A549 (cell line): ENCODE measurements at regions of chr17 and their contacts with region 1.

Region 1: GRCh38 chr17:35242805-35243560 is at the start of gene SLFN5:
- DNase-seq: peak; percentile 91 to 98
- ATAC-seq: peak; percentile 83 to 96
- H3K4me3 ChIP-seq: peak within 1 kb of the TSS; percentile 82
- H3K27ac ChIP-seq: peak within 1 kb of the TSS; percentile 88
- H3K4me1 ChIP-seq: peaks cover 40% of the 10 kb centered on the region
- CTCF ChIP-seq: no peak
- EP300 ChIP-seq: no peak
- POLR2A ChIP-seq: peak; percentile 91
- RAD21 ChIP-seq: no peak; a peak in 2 of 5 replicates
- polyA plus RNA-seq, gene SLFN5: 30.3 and 33.1 TPM in 2 replicates

Region 2: DNA sequence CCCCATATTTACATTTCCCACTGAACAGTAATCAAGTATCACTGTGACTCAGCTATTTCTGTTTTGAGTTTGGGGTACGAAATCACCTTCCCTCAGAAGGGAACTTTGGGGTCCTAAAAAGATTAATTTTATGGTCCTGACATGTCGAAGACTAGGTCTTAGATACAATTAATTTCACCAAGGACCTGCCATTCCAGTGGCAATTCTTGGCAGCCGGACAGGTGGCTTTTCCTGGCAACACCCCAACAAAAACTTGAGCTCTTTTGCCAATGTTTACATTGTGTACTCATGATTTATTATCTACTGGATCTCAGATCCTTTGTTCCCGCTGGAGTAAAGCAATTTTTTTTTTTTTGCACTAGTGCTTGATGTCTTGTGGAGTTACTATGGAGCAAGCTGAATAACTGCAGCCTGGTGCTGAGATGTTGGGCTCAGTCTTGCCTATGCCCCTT is 14.3 kb after region 1 on chr17:
- CTCF ChIA-PET with region 1: interaction called, 3 read pairs
- POLR2A ChIA-PET with region 1: interaction called, 65 read pairs
- DNase-seq: peak; percentile 51 to 89
- ATAC-seq: peak; percentile 51 to 70
- H3K4me3 ChIP-seq: no peak overlapping the region
- H3K27ac ChIP-seq: peak overlapping the region; percentile 66 to 76
- H3K4me1 ChIP-seq: peaks cover 45% of the 10 kb centered on the region
- CTCF ChIP-seq: no peak
- EP300 ChIP-seq: peak; percentile 45 to 59; a peak in 1 of 5 replicates
- POLR2A ChIP-seq: no peak
- RAD21 ChIP-seq: peak; percentile 12 to 23; a peak in 1 of 5 replicates

Region 3: DNA sequence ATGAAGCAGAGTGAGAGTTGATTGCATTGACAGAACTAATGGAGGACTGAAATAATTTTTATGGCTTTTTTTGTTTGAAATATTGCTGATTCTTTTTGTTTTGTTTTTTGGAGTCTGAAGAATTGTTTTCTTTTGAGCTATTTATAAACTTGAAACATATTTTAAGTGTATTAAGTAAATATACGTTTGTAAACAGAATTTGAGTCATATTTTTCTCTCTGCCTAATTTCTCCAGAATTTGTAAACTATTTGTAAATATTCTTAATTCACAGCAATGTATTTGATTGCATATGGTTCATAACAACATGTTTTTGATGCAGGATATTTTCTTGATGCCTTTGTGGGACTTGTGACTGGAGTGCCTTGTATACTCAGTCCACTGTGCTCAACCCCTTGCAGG is 79.8 kb after region 1 on chr17:
- CTCF ChIA-PET with region 1: no interaction called
- POLR2A ChIA-PET with region 1: no interaction called
- DNase-seq: no peak
- ATAC-seq: no peak
- H3K4me3 ChIP-seq: no peak overlapping the region
- H3K27ac ChIP-seq: no peak overlapping the region
- H3K4me1 ChIP-seq: no peaks in the 10 kb centered on the region
- CTCF ChIP-seq: no peak
- EP300 ChIP-seq: no peak
- POLR2A ChIP-seq: no peak
- RAD21 ChIP-seq: no peak